Naive thymus-derived CD8-positive, alpha-beta T cell (primary cell): ENCODE measurements at regions of chr12 and their contacts with region 1.

Region 1: GRCh38 chr12:111841750-111842555 is at the start of gene MAPKAPK5:
- DNase-seq: peak; percentile 93 to 99 (median 98)
- ATAC-seq: peak; percentile 89 to 91
- H3K4me3 Mint-ChIP-seq: peak within 1 kb of the TSS; percentile 94 to 99 (median 97)
- H3K27ac Mint-ChIP-seq: peak within 1 kb of the TSS; percentile 96 to 100 (median 99)
- H3K4me1 Mint-ChIP-seq: peaks cover 24 to 70% (median 60%) of the 10 kb centered on the region in 4 donors
- H3K27me3 Mint-ChIP-seq: peaks cover 0 to 3% (median 0%) of the 10 kb centered on the region in 5 donors
- polyA plus RNA-seq, gene MAPKAPK5: 25.8 to 54.2 (median 33.5) TPM

Region 2: DNA sequence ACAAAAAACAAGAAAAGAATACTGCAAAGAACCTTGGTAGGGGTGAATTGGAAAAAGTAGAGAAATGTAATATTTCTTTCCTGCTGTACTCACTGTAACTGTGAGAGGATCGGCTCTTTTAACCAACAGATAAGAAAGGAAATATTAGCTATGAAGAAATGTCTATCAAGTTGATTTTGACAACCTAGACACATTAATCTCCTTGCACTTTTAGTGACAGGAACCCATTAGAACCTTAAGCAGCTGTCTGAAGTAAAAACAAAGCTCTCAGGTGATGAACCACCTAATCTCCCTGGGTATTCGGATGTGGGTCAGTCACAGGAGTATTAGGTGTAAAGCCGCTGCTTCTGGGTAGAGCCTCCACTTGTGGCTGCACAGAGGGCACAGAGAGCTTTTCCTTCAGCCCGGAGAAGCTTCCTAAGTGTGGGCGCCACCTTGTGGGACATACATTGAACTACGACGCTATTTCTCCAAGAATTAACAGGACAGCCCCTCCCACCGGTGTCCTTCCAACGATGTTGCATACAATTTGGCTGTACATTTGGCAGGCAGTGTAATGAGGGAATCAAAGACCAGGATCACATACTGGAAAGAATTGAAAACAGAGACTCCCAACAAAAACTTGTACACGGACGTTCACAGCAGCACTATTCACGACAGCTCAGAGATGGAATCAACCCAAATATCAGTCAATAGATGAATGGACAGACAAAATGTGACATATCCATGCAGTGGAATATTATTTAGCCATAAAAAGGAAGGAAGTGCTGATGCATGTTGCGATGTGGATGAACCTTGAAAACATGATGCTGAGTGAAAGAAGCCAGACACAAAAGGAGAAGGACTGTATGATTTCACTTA is 28.8 kb before region 1 on chr12:
- POLR2A ChIA-PET with region 1: interaction called, 10 read pairs
- DNase-seq: peak; percentile 32 to 78 (median 56)
- ATAC-seq: peak; percentile 94 to 99
- H3K4me3 Mint-ChIP-seq: peak overlapping the region in 4 of 10 donors; percentile 1 to 36 (median 24)
- H3K27ac Mint-ChIP-seq: peak overlapping the region in 3 of 10 donors; percentile 36 to 68 (median 47)
- H3K4me1 Mint-ChIP-seq: peaks cover 7 to 9% (median 9%) of the 10 kb centered on the region in 4 donors
- H3K27me3 Mint-ChIP-seq: peaks cover 0 to 5% (median 3%) of the 10 kb centered on the region in 5 donors

Region 3: DNA sequence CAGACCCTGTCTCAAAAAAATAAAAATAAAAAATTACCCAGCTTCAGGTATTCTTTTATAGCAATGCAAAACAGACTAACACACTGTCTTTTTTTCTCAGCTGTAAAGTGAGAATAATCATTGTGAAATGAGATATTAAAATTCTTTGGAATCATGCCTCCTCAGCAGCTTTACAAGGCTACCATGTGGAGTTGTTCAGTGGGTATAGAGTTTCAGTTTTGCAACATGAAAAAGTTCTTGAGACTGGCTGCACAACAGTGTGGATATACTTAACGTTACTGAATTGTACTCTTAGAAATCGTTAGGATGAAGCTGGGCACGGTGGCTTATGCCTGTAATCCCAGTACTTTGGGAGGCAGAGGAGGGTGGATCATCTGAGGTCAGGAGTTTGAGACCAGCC is 15.6 kb before region 1 on chr12:
- POLR2A ChIA-PET with region 1: interaction called, 14 read pairs
- DNase-seq: no peak
- ATAC-seq: no peak
- H3K4me3 Mint-ChIP-seq: no peak overlapping the region
- H3K27ac Mint-ChIP-seq: peak overlapping the region in 1 of 10 donors; percentile 43
- H3K4me1 Mint-ChIP-seq: no peaks in the 10 kb centered on the region
- H3K27me3 Mint-ChIP-seq: peaks cover 0 to 3% (median 0%) of the 10 kb centered on the region in 5 donors